ENCODE measurements at regions of chr1 and their contacts with region 1.

Region 1: GRCh38 chr1:90719330-90720144 is 2.4 kb upstream of the BARHL2 start:
- DNase-seq: no peak
- ATAC-seq: peak; percentile 33

Region 2: GRCh38 chr1:90457985-90458384 is 261.6 kb before region 1 on chr1:
- intact Hi-C with region 1: no loop called
- DNase-seq: no peak
- ATAC-seq: no peak

Region 3: DNA sequence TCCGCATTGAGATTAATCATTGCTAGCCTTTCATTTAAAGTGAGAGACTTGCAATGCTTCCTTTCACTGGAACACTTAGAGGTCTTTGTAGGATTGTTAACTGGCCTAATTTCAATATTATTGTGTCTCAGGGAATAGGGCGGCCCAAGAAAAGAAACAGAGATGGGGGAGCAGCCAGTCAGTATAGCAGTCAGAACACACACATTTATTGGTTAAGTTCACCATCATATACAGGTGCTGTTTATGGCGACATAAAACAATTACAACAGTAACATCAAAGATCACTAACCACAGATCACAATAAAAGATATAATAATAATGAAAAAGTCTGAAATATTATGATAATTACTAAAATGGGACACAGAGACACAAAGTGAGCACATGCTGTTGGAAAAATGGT is 31.8 kb before region 1 on chr1:
- intact Hi-C with region 1: no loop called
- DNase-seq: no peak
- ATAC-seq: no peak

Region 4: GRCh38 chr1:90761781-90762589 is 42.4 kb after region 1 on chr1:
- intact Hi-C with region 1: loop called (anchors 1 kb)
- DNase-seq: no peak
- ATAC-seq: no peak

Region 5: DNA sequence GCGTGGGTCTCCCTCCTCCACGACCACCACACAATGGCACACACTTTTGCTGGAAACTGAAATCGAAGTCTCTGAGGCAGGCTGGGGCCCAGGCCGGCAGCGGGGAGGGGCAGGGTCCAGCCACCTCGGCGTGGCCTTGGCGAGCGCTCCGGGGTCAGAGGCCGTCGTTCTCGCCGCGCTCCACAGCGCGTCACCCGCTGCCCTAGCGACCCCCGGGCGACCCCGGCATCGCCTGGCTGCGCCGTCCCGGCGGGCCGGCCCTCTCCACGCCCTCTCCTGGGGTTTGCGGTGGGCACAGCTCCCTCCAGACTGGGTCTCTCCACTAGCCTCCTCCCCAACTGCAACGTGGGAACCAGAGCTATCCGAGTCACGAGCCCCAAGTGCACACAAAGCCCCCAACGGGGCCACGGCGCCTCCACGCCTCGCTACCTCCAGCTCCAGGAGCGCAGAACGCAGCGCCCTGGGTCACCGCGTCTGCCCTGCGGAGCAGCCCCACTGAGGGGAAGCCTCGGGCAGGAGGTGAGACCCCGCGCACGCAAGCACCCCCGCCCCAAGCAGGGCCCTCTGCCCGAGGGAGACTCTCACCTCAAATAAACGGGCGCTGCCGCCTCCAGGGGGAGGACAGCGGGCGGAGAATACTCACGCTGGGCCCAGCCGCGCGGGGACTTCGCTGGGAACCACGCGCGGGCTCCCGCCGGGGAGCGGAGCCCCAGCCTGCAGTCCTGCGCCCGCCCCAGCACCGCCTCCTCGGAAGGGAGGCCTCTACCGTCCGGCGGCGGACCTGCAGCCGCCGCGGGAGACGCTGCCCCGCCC is 131.6 kb after region 1 on chr1:
- intact Hi-C with region 1: no loop called
- DNase-seq: peak; percentile 89
- ATAC-seq: peak; percentile 97